ENCODE measurements at regions of chr20 and their contacts with region 1.

Region 1: DNA sequence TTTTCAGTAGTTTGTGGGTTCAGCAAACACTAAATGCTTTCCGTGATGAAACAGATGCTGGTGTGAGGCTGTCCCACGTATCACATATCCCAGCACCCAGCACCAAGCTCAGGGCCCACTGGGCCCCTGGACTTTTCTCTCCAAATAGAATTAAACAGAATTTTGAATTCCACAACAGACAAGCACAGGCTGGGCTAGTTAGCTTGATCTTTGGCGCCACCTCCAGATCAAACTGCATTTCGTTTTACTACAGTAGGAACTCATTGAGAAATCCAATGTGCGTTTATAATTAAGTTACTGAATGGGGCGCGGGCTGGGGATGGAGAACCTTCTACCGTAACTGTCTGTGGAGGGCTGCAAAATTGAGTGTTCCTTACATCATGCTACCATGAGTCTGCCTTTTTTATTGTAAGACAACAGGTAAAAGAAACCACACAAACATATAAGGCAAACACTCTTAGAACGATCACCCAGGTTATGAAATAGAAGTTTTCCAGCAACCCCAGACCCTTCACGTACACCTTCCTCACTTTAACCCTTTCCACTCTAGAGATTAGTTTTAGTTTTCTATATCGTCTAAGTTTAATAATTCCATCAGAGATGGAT is 107.8 kb downstream of the ZFP64 start:
- DNase-seq: peak; percentile 59
- H3K4me3 Mint-ChIP-seq: no peak overlapping the region
- H3K27ac Mint-ChIP-seq: no peak overlapping the region
- H3K4me1 Mint-ChIP-seq: peaks cover 4% of the 10 kb centered on the region
- H3K27me3 Mint-ChIP-seq: no peaks in the 10 kb centered on the region

Region 2: GRCh38 chr20:51372176-51372803 is 711.4 kb before region 1 on chr20:
- CTCF ChIA-PET with region 1: interaction called, 10 read pairs
- POLR2A ChIA-PET with region 1: no interaction called
- intact Hi-C with region 1: no loop called
- DNase-seq: peak; percentile 74
- H3K4me3 Mint-ChIP-seq: no peak overlapping the region
- H3K27ac Mint-ChIP-seq: no peak overlapping the region
- H3K4me1 Mint-ChIP-seq: peaks cover 4% of the 10 kb centered on the region
- H3K27me3 Mint-ChIP-seq: no peaks in the 10 kb centered on the region

Region 3: GRCh38 chr20:51695574-51696303 is 388.0 kb before region 1 on chr20:
- CTCF ChIA-PET with region 1: interaction called, 12 read pairs
- POLR2A ChIA-PET with region 1: no interaction called
- intact Hi-C with region 1: loop called (anchors 5 kb)
- DNase-seq: peak; percentile 29
- H3K4me3 Mint-ChIP-seq: no peak overlapping the region
- H3K27ac Mint-ChIP-seq: no peak overlapping the region
- H3K4me1 Mint-ChIP-seq: peaks cover 12% of the 10 kb centered on the region
- H3K27me3 Mint-ChIP-seq: peaks cover 22% of the 10 kb centered on the region

Region 4: DNA sequence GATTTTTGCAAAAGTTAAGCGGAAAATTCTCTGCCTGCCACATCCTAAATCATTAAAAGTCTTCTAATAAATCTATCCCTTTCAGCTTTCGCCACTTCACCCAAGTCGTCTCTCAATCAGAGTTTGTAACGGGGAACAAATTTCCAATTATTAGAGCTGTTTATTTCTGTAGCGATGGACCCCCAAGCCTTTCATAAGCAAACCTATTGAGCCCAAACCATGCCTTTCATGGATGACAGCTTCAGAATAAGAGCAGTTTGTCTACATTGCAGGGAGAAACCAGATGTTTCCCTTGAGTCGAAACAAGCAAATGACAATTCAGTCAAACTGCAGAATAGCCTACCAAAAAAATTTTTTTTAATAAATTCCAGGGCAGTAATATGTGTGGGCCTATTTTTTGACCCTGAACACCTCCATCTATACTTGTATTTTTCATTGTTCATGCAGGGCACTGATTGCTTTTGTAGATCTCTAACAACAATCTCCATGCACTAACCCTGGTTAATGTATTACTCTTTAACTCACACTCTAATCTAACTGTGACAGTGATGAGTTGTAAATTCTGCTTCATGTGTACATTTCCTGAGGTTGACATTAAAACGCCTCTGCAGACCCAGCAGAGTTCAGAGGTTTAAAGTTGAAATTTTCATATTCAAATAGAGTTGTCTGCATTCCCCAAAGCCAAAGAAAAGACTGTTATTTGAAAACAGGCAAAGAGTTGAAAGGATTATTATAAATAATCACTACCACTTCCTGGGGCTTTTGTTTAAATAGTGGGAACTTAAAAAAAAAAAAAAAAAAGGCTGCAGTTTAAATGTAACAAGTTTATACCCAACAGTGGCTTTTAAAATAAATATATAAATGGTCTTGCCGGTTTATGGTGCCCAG is 380.1 kb before region 1 on chr20:
- CTCF ChIA-PET with region 1: interaction called, 12 read pairs
- POLR2A ChIA-PET with region 1: no interaction called
- intact Hi-C with region 1: loop called (anchors 5 kb)
- DNase-seq: no peak
- H3K4me3 Mint-ChIP-seq: no peak overlapping the region
- H3K27ac Mint-ChIP-seq: no peak overlapping the region
- H3K4me1 Mint-ChIP-seq: no peaks in the 10 kb centered on the region
- H3K27me3 Mint-ChIP-seq: peaks cover 8% of the 10 kb centered on the region

Region 5: DNA sequence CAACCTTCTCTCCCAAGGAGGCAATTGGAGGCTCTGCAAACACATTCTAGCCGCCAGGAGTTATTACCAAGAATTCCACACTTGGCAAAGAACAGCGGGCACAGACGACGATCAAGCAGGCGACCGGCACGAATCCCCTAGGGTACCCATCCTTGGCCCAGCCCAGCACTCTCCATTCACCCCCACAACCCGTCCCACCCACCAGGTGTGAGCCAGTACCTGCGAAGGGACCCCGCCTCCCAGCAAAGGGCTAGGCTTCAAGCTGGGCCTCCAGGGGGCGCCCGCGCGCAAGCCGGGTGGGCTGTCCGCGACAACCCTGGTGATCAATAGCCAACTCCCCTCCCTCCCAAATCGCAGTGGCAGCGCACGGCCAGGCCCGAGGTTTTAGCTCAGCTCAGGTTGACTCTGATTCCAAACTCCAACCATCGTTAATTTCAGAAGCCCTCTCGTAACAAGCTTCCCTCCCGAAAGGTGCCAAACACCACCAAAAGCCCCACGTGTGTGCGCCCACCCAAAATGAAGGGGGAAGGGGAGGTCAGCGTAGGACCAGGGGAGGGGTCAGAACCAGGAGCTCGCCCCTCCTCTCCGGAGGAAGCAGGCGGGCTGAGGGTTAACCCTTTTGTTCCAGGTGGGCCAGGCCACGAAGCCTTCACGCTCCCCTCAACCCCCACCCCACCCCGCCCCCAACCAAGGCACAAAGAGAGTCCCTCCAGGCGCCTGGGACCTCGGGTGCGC is 283.5 kb before region 1 on chr20:
- CTCF ChIA-PET with region 1: interaction called, 17 read pairs
- POLR2A ChIA-PET with region 1: no interaction called
- intact Hi-C with region 1: no loop called
- DNase-seq: peak; percentile 76
- H3K4me3 Mint-ChIP-seq: peak overlapping the region; percentile 20
- H3K27ac Mint-ChIP-seq: no peak overlapping the region
- H3K4me1 Mint-ChIP-seq: peaks cover 9% of the 10 kb centered on the region
- H3K27me3 Mint-ChIP-seq: peaks cover 62% of the 10 kb centered on the region